Activated B cell treated with CpG ODN at 0.5 μM for 24 hours (primary cell): ENCODE measurements at regions of chr1 and their contacts with region 1.

Region 1: GRCh38 chr1:161531986-161532643 is 7.8 kb downstream of the HSPA6 start:
- DNase-seq: no peak
- ATAC-seq: no peak
- H3K4me3 Mint-ChIP-seq: peak overlapping the region; percentile 35
- H3K27ac Mint-ChIP-seq: no peak overlapping the region
- H3K4me1 Mint-ChIP-seq: peaks cover 22% of the 10 kb centered on the region
- H3K27me3 Mint-ChIP-seq: peaks cover 5% of the 10 kb centered on the region
- CTCF ChIP-seq: no peak

Region 2: DNA sequence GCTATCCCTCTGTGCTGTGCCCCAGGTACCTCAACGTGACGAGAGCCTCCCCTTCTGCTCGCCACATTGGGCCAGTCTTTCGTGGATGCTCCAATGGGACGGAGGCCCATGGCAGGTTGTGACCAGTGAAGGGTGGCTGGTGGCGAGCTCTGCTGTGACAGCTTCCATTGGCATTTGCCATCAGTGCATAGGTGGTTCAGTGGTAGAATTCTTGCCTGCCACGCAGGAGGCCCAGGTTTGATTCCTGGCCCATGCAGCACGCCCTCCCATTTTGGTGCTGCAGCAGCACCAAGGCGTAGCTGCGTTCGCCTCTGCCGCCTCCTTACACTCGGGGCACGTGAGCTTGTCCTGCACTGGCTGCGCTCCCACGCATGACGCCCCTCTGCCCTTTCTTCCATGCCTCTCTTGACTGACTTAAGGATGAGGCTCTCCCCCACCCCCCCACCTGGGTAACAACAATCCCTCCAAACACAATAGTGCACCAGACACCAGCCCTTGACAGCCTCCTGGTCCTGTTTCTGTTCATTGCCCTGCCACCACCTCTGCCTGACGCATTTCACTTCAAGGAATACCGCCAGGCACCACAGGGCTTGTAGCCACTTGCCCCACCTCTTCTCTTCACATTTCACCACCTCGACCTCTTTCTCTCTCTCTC is 51.6 kb before region 1 on chr1:
- CTCF ChIA-PET with region 1: no interaction called
- POLR2A ChIA-PET with region 1: interaction called, 10 read pairs
- intact Hi-C with region 1: no loop called
- DNase-seq: no peak
- ATAC-seq: no peak
- H3K4me3 Mint-ChIP-seq: no peak overlapping the region
- H3K27ac Mint-ChIP-seq: no peak overlapping the region
- H3K4me1 Mint-ChIP-seq: no peaks in the 10 kb centered on the region
- H3K27me3 Mint-ChIP-seq: peaks cover 18% of the 10 kb centered on the region
- CTCF ChIP-seq: no peak

Region 3: GRCh38 chr1:161549652-161550051 is 17.5 kb after region 1 on chr1 and contains the start of gene FCGR3A:
- CTCF ChIA-PET with region 1: no interaction called
- POLR2A ChIA-PET with region 1: no interaction called
- intact Hi-C with region 1: no loop called
- DNase-seq: no peak
- ATAC-seq: no peak
- H3K4me3 Mint-ChIP-seq: no peak within 1 kb of the TSS
- H3K27ac Mint-ChIP-seq: no peak within 1 kb of the TSS
- H3K4me1 Mint-ChIP-seq: peaks cover 13% of the 10 kb centered on the region
- H3K27me3 Mint-ChIP-seq: no peaks in the 10 kb centered on the region
- CTCF ChIP-seq: no peak
- total RNA-seq, gene FCGR3A: 0.24 and 0.47 TPM in 2 replicates

Region 4: DNA sequence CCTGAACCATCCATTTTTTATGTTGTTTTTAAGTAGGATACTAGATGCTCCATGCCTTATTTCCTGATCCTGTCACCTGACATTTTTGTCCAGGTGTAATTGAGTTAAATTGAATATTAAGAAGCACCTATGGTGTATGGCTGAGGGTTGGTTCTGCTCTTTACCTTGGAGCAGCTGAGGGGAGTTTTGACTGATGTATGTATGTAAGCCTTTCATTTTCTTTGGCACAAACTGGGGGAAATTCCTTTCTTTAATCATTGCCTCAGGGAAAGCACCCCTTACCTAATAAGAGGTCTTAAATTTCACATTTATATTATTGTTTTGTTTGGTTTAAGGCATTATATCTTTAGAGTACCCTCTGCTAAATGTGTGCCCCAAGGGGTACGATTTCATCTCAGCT is 1731.7 kb after region 1 on chr1:
- CTCF ChIA-PET with region 1: no interaction called
- POLR2A ChIA-PET with region 1: no interaction called
- intact Hi-C with region 1: no loop called
- DNase-seq: no peak
- ATAC-seq: no peak
- H3K4me3 Mint-ChIP-seq: no peak overlapping the region
- H3K27ac Mint-ChIP-seq: no peak overlapping the region
- H3K4me1 Mint-ChIP-seq: no peaks in the 10 kb centered on the region
- H3K27me3 Mint-ChIP-seq: no peaks in the 10 kb centered on the region
- CTCF ChIP-seq: no peak